ENCODE measurements at regions of chr1 and their contacts with region 1.

Region 1: GRCh38 chr1:204363335-204364124 is 3.8 kb upstream of the PLEKHA6 start:
- DNase-seq: peak; percentile 73
- ATAC-seq: peak; percentile 43
- H3K4me3 Mint-ChIP-seq: peak overlapping the region; percentile 56
- H3K27ac Mint-ChIP-seq: no peak overlapping the region
- H3K4me1 Mint-ChIP-seq: peaks cover 19% of the 10 kb centered on the region
- H3K27me3 Mint-ChIP-seq: peaks cover 20% of the 10 kb centered on the region
- CTCF ChIP-seq: peak; percentile 98

Region 2: GRCh38 chr1:204257954-204258752 is 105.4 kb before region 1 on chr1:
- CTCF ChIA-PET with region 1: interaction called, 97 read pairs
- POLR2A ChIA-PET with region 1: no interaction called
- DNase-seq: peak; percentile 86
- ATAC-seq: peak; percentile 71
- H3K4me3 Mint-ChIP-seq: no peak overlapping the region
- H3K27ac Mint-ChIP-seq: no peak overlapping the region
- H3K4me1 Mint-ChIP-seq: peaks cover 36% of the 10 kb centered on the region
- H3K27me3 Mint-ChIP-seq: no peaks in the 10 kb centered on the region
- CTCF ChIP-seq: peak; percentile 57

Region 3: GRCh38 chr1:204278254-204278653 is 85.3 kb before region 1 on chr1:
- CTCF ChIA-PET with region 1: interaction called, 18 read pairs
- POLR2A ChIA-PET with region 1: no interaction called
- DNase-seq: no peak
- ATAC-seq: no peak
- H3K4me3 Mint-ChIP-seq: no peak overlapping the region
- H3K27ac Mint-ChIP-seq: no peak overlapping the region
- H3K4me1 Mint-ChIP-seq: peaks cover 13% of the 10 kb centered on the region
- H3K27me3 Mint-ChIP-seq: no peaks in the 10 kb centered on the region
- CTCF ChIP-seq: no peak

Region 4: GRCh38 chr1:204307334-204307883 is 56.1 kb before region 1 on chr1:
- CTCF ChIA-PET with region 1: interaction called, 17 read pairs
- POLR2A ChIA-PET with region 1: interaction called, 3 read pairs
- DNase-seq: peak; percentile 64
- ATAC-seq: peak; percentile 85
- H3K4me3 Mint-ChIP-seq: peak overlapping the region; percentile 68
- H3K27ac Mint-ChIP-seq: peak overlapping the region; percentile 35; the same call in 1 of the 2 replicates
- H3K4me1 Mint-ChIP-seq: peaks cover 80% of the 10 kb centered on the region
- H3K27me3 Mint-ChIP-seq: peaks cover 4% of the 10 kb centered on the region
- CTCF ChIP-seq: no peak

Region 5: DNA sequence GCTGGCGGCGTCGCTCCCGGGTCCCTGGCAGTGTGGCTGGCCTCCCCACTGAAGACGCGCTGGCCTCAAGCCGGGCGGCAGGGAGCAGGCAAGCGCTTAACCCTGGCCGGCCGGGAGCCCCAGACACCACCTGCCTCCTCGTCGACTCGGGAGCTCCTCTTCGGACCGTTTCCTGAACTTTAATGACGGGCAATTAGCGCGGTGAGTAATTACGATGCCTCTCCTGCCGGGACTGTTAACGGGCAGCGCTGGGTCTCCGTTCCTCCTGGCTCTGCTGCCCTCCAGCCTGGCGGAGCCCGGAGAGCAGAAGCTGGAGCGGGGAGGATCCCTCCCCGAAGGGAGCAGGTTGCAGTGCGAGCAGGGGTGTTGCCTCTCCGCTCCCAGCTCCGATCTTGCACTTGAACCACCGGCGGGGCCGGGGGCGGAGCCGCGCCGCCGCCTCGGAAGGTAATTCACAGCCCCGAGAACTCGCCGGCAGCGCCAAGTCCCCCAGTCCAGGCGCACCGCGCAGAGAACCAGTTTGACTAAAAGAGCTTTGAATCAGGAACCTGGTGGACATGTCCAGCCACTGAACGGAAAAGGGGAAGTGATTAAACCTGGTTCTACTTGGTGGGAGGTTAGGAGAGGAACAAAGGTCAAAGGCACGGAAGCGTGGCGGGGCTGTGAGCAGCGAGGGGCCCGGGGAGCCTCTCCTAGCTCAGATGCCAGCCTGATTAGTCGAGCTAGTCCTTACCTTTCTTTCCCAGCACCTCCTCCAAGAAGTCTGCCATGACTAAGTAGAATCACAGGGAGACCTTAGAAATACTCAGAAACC is 14.5 kb after region 1 on chr1:
- CTCF ChIA-PET with region 1: interaction called, 10 read pairs
- POLR2A ChIA-PET with region 1: no interaction called
- DNase-seq: peak; percentile 72
- ATAC-seq: peak; percentile 85
- H3K4me3 Mint-ChIP-seq: peak overlapping the region; percentile 85
- H3K27ac Mint-ChIP-seq: peak overlapping the region; percentile 82; the same call in 1 of the 2 replicates
- H3K4me1 Mint-ChIP-seq: peaks cover 9% of the 10 kb centered on the region
- H3K27me3 Mint-ChIP-seq: peaks cover 36% of the 10 kb centered on the region
- CTCF ChIP-seq: no peak

Region 6: DNA sequence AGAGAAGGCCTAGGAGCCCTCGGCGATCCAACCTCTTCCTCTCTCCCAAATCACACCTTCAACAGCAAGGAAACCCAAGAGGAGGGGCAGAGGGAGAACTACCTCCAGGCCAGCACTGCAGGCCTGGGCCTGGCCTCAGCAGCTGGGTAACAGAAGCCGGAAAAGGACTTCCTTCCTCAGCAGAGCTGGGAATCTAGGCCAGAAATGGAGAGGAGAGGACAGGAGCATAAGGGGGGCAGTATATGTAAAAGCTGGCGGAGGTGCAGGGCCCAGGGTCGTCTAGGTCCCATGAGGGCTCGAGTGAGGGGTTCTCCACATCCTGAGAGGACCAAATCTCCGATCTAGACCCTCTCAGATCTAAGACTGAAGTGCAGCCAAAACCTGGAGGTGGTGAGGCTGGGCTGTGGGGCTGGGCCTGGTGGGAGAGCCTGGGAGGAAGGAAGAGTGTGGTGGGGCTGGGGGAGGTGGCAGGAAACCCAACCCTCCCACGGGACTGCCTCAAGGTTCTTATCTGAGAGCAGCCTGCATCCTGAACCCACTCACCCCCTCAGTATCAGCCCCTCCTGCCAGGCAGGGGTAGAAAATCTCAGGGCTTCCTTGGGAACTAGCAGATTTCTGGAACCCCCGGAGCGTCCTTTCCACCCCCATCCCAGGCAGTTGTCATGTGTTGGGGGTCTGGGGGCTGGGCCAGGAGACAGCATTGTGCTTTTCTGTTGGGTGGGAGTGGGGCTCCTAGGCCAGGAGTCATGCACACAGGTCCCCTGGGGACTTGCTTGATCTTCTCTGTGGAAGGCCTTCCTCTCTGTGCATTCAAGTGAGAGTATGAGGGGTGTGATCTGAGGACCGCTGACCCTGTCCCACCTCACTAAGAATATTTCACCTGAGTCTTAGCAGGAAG is 98.0 kb after region 1 on chr1:
- CTCF ChIA-PET with region 1: no interaction called
- POLR2A ChIA-PET with region 1: no interaction called
- DNase-seq: no peak
- ATAC-seq: no peak
- H3K4me3 Mint-ChIP-seq: no peak overlapping the region
- H3K27ac Mint-ChIP-seq: no peak overlapping the region
- H3K4me1 Mint-ChIP-seq: peaks cover 23% of the 10 kb centered on the region
- H3K27me3 Mint-ChIP-seq: no peaks in the 10 kb centered on the region
- CTCF ChIP-seq: no peak

Region 7: DNA sequence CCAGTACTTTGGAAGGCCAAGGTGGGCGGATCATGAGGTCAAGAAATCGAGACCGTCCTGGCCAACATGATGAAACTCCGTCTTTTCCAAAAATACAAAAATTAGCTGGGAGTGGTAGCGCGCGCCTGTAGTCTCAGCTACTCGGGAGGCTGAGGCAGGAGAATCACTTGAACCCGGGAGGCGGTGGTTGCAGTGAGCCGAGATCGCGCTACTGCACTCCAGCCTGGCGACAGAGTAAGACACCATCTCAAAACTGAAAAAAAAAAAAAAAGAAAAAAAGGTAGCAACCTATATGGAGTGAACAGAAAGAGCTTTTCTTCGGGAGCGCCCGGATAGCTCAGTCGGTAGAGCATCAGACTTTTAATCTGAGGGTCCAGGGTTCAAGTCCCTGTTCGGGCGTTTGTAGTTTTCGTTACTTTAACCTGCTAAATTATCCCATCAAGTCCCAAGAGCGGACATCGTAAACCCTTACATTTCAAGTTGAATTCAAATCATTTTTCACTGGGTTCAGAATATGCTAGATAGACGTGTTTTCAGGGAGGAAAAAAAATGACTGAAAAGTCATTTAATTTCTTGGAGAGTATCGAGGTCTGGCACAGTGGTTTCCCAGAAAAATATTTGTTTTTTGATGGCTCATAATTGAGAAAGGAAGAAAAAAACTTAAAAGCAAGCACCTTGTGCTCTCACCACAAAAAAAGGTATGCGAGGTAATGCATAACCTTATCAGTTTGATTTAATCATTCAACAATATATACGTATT is 142.9 kb after region 1 on chr1:
- CTCF ChIA-PET with region 1: no interaction called
- POLR2A ChIA-PET with region 1: no interaction called
- DNase-seq: peak; percentile 72
- ATAC-seq: peak; percentile 86
- H3K4me3 Mint-ChIP-seq: peak overlapping the region; percentile 96
- H3K27ac Mint-ChIP-seq: peak overlapping the region; percentile 68
- H3K4me1 Mint-ChIP-seq: peaks cover 11% of the 10 kb centered on the region
- H3K27me3 Mint-ChIP-seq: peaks cover 3% of the 10 kb centered on the region; the same call in 1 of the 2 replicates
- CTCF ChIP-seq: no peak